Activated CD4-positive, alpha-beta T cell treated with anti-CD3 and anti-CD28 coated beads for 36 hours (primary cell): ENCODE measurements at regions of chr22 and their contacts with region 1.

Region 1: DNA sequence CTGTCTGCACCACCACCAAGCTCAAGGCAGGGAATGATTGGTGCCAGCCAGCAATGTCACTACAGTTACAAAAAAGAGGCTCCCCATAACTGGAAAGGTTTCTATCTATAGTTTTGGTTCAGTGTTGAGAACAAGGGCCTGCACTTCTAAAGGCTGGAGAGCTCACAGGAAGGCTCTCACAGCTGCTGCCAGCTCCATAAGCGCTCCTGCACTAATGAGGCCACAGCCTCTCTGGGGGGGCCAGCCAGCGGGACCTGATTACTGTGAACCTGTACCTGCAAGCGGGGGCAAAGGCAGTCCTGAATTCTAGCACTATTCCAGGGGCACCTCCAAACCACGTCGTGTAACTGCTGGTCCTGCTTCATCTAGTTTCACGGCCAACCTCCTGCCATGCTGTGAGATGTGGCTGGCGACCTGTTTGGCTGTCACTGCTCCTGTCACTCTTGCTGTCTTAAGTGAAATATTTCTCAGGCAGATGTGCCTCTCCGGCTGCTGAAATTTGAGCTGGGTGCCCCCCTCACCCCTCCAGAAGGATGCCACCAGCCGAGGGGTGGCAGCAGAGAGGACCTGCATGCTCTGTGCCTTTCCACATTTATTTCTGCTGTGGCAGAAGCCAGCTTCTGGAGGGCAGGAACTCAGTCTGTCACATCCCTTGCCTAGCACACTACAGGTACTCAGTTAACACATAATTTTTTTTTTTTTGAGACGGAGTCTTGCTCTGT is 53.3 kb upstream of the ARFGAP3 start:
- DNase-seq: no peak
- ATAC-seq: no peak
- H3K4me3 Mint-ChIP-seq: no peak overlapping the region
- H3K27ac Mint-ChIP-seq: no peak overlapping the region
- H3K4me1 Mint-ChIP-seq: no peaks in the 10 kb centered on the region
- H3K27me3 Mint-ChIP-seq: no peaks in the 10 kb centered on the region

Region 2: DNA sequence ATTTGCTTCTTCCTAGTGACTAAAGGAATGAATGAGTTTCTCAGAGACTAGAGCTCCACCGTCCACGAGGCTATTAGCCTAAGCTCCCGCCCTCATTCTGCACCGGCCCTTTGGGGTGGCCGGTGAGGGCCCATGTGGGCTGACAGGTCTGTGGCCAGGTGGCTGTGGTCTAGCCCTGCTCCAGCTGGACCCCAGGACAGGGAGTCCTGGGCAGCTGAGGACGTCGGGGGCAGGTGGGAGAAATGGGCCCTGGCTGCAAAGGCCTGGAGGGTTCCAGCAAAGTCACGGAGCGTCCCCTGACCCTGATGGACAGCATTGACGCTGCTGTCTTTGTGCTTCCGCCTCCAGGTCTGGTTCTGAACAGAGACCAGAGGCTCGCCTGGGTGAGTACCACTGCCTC is 344.4 kb before region 1 on chr22:
- CTCF ChIA-PET with region 1: no interaction called
- POLR2A ChIA-PET with region 1: no interaction called
- intact Hi-C with region 1: loop called in 1 of 2 experiments (anchors 5 kb)
- DNase-seq: no peak
- ATAC-seq: no peak
- H3K4me3 Mint-ChIP-seq: no peak overlapping the region
- H3K27ac Mint-ChIP-seq: no peak overlapping the region
- H3K4me1 Mint-ChIP-seq: no peaks in the 10 kb centered on the region
- H3K27me3 Mint-ChIP-seq: no peaks in the 10 kb centered on the region